HEK293 (cell line): ENCODE measurements at regions of chr11 and their contacts with region 1.

Region 1: GRCh38 chr11:83836883-83837654 is 550.9 kb upstream of the CCDC90B start:
- H3K4me3 ChIP-seq: no peak overlapping the region
- H3K27ac ChIP-seq: no peak overlapping the region
- H3K4me1 ChIP-seq: no peaks in the 10 kb centered on the region
- CTCF ChIP-seq: 0 out of 2 replicates have a peak, but pooled peaks have one; percentile 50

Region 2: GRCh38 chr11:84044706-84045105 is 207.6 kb after region 1 on chr11:
- CTCF ChIA-PET with region 1: no interaction called
- POLR2A ChIA-PET with region 1: no interaction called
- H3K4me3 ChIP-seq: no peak overlapping the region
- H3K27ac ChIP-seq: no peak overlapping the region
- H3K4me1 ChIP-seq: no peaks in the 10 kb centered on the region
- CTCF ChIP-seq: no peak

Region 3: DNA sequence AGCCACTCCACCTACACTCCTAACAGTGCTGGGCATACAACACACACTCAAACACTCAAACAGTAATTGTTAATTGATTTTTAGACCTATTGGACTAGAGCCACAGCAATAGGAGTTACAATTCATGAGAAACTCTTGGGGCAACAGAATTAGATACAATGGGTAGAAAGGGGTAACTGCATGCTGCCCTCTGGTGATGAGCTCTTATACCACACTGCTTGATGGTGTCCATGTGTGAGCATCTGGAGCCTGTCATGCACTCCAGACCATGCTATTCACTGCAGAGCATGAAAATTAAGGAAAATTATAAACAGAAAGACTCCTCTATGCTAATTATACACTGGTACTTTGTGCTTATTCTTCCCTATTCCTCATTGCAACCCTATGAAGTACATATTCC is 424.6 kb after region 1 on chr11:
- CTCF ChIA-PET with region 1: interaction called, 10 read pairs
- POLR2A ChIA-PET with region 1: no interaction called
- H3K4me3 ChIP-seq: no peak overlapping the region
- H3K27ac ChIP-seq: no peak overlapping the region
- H3K4me1 ChIP-seq: no peaks in the 10 kb centered on the region
- CTCF ChIP-seq: no peak

Region 4: DNA sequence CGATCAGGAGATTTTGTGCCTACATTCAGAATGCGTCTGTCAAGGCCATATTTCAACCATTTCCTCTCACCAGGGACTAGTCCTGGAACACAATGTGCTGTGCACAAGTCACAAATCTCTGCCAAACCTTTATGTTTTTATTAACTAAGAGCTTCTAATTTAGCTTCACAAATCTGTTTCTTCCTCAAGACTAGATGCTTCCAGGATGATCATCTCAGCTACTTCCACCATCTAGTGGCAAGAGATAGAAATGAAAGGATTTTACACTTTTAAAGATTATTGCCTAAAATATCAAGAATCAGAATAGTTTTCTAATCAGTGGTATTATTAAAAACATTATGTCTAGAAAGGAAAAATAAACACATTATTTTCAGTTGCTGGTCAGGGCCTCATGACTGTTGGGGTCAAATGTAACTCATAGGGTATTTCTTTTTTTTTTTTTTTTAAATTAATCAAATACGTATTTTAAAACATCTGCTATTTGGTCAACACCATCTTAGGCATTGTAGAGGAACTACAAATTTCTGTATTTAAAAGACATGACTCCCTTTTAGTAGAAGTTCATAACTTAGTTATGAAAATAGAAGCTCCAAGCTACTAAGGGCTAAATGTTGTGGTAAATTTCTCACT is 687.5 kb after region 1 on chr11:
- CTCF ChIA-PET with region 1: interaction called, 16 read pairs
- POLR2A ChIA-PET with region 1: no interaction called
- H3K4me3 ChIP-seq: no peak overlapping the region
- H3K27ac ChIP-seq: no peak overlapping the region
- H3K4me1 ChIP-seq: no peaks in the 10 kb centered on the region
- CTCF ChIP-seq: no peak